Activated B cell treated with CpG ODN at 0.5 μM for 24 hours (primary cell): ENCODE measurements at regions of chr2 and their contacts with region 1.

Region 1: GRCh38 chr2:104758199-104758620 is 95.7 kb upstream of the POU3F3 start:
- DNase-seq: no peak
- ATAC-seq: no peak
- H3K4me3 Mint-ChIP-seq: no peak overlapping the region
- H3K27ac Mint-ChIP-seq: no peak overlapping the region
- H3K4me1 Mint-ChIP-seq: no peaks in the 10 kb centered on the region
- H3K27me3 Mint-ChIP-seq: peaks cover 5% of the 10 kb centered on the region
- CTCF ChIP-seq: no peak

Region 2: GRCh38 chr2:103401621-103402020 is 1356.6 kb before region 1 on chr2:
- CTCF ChIA-PET with region 1: no interaction called
- POLR2A ChIA-PET with region 1: interaction called, 21 read pairs
- intact Hi-C with region 1: no loop called
- DNase-seq: no peak
- ATAC-seq: no peak
- H3K4me3 Mint-ChIP-seq: no peak overlapping the region
- H3K27ac Mint-ChIP-seq: no peak overlapping the region
- H3K4me1 Mint-ChIP-seq: no peaks in the 10 kb centered on the region
- H3K27me3 Mint-ChIP-seq: no peaks in the 10 kb centered on the region
- CTCF ChIP-seq: no peak

Region 3: DNA sequence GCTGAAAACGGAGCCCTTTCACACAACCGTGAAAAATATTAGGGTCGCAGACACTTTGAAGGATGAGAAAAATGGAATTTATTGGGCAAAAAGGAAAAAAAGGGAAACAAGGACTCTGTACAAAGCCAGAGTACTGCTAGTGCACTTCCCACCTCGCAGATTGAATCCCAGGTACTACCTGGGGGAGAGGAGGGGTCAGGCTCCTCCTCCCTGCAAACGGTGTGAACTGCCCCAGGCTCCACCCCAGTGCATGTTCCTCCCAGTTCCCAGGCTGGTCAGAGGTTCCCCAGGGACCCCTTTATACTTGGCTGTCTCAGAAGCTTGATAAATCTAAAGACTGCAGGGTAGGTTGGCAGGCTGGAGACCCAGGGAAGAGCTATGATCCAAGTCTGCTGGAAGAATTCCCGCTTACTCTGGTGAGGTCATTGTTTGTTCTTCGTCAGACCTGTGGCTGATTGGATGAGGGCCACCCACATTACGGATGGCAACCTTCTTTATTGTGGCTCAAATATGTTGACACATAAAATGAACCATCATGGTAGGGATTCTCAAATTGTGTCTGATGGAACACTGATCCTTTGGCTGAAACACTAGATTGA is 194.7 kb before region 1 on chr2:
- CTCF ChIA-PET with region 1: no interaction called
- POLR2A ChIA-PET with region 1: no interaction called
- intact Hi-C with region 1: no loop called
- DNase-seq: no peak
- ATAC-seq: no peak
- H3K4me3 Mint-ChIP-seq: no peak overlapping the region
- H3K27ac Mint-ChIP-seq: no peak overlapping the region
- H3K4me1 Mint-ChIP-seq: no peaks in the 10 kb centered on the region
- H3K27me3 Mint-ChIP-seq: peaks cover 2% of the 10 kb centered on the region
- CTCF ChIP-seq: no peak